ENCODE measurements at regions of chr5 and their contacts with region 1.

Region 1: DNA sequence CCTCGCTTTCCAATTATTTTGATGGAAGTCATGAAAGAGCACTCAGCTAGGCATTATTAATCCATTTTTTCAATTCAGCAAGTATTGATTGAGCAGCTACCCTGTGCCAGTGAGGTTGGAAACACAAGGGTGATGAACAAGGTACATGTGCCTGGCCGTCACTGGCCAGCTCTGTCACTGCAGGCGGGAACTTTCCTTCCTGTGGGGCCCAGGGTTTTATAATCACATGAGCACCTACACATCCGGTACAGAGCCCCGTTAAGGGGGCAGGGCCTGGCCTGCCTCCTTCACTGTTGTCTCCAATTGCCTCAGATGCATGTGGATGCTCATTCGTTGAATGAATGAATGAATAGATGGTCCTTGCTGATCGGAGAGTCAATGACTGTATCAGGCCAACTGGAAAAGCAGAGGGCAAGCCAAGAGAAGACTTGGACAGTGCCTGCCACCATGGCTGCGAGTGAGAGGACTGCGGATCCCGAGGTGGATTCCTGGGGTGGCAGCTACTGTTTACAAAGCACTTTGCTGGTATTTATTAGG is 55.9 kb upstream of the KCNMB1 start:
- DNase-seq: no peak
- ATAC-seq: no peak
- H3K4me3 ChIP-seq: no peak overlapping the region
- H3K27ac ChIP-seq: no peak overlapping the region
- H3K4me1 ChIP-seq: no peaks in the 10 kb centered on the region
- H3K27me3 ChIP-seq: no peaks in the 10 kb centered on the region
- CTCF ChIP-seq: no peak
- POLR2A ChIP-seq: no peak

Region 2: DNA sequence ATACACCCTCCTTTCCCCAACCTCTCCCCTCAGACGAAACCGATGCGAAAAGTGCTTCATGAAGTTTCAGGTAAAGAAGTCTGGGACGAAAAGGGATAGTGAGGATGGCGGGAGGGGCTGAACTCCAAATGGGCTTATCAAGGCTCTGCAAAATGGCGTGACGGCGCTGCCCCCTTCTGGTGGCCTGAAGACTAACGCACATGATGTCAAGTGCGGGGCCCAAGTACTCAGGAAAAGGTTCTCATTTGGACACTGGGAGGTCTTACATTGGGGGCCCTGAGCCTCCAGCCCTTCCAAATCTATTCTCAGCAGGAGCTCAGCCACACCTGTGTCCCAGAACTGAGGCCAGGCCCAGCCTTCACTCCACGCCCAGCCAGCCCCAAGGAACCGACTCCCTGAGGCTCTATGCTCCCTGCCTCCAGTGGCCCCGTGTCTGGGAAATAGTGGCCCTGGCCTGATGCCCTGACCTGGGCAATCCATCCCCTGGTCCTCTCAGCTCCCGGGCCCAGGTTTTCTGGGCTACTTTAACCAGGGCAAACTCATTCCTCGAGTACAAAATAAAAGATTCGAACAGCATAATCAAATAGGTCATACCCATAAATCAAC is 178.6 kb after region 1 on chr5:
- in situ Hi-C with region 1: loop called in 1 of 4 experiments (anchors 5 kb)
- intact Hi-C with region 1: no loop called
- DNase-seq: no peak
- ATAC-seq: no peak
- H3K4me3 ChIP-seq: no peak overlapping the region
- H3K27ac ChIP-seq: no peak overlapping the region
- H3K4me1 ChIP-seq: no peaks in the 10 kb centered on the region
- H3K27me3 ChIP-seq: no peaks in the 10 kb centered on the region
- CTCF ChIP-seq: peak in 3 of 5 experiments; percentile 26 to 35 (median 33)
- POLR2A ChIP-seq: no peak